ENCODE measurements at regions of chr7 and their contacts with region 1.

Region 1: GRCh38 chr7:18352339-18353255 is 143.0 kb upstream of the HDAC9 start:
- DNase-seq: peak; percentile 76
- H3K4me3 ChIP-seq: no peak overlapping the region
- CTCF ChIP-seq: peak; percentile 58

Region 2: GRCh38 chr7:18552943-18553584 is 200.5 kb after region 1 on chr7:
- in situ Hi-C with region 1: loop called (anchors 5 kb)
- DNase-seq: no peak
- H3K4me3 ChIP-seq: no peak overlapping the region
- CTCF ChIP-seq: no peak

Region 3: GRCh38 chr7:18770154-18770811 is 417.7 kb after region 1 on chr7:
- in situ Hi-C with region 1: no loop called
- DNase-seq: peak; percentile 91
- H3K4me3 ChIP-seq: no peak overlapping the region
- CTCF ChIP-seq: no peak

Region 4: DNA sequence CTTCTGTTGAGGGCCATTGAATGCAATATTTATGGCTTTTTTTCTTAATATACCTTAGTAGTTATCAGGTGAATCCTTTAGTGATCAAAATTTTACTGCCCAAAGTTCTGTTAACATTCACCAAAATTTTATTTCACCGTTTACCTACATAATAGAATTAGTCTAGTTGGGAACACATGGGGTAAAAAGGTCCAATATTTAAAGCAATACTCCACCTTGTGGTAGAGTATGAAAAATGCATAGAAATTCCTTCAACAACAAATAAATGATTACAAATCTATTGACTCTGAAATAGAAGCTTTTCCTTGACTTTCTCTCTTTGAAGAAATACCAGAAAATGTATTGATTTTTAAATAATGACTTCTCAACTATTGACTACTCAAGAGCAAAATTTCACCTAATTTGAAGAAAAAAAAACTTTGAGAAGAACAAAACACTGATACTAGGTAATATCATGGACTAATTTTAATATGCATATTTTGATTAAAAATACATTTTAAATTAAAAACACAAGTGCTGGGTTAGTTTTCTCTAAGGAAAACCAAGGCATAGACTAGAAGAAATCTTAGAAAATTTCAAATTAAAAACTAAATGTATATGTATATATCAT is 1312.9 kb after region 1 on chr7:
- in situ Hi-C with region 1: loop called (anchors 25 kb)
- DNase-seq: peak; percentile 22
- H3K4me3 ChIP-seq: no peak overlapping the region
- CTCF ChIP-seq: no peak

Measured in astrocyte of the cerebellum (primary cell).